Activated CD4-positive, alpha-beta T cell treated with anti-CD3 and anti-CD28 coated beads for 36 hours (primary cell): ENCODE measurements at regions of chr16 and their contacts with region 1.

Region 1: GRCh38 chr16:26386096-26386495 is 680.6 kb upstream of the C16orf82 start:
- DNase-seq: no peak
- ATAC-seq: no peak
- H3K4me3 Mint-ChIP-seq: no peak overlapping the region
- H3K27ac Mint-ChIP-seq: no peak overlapping the region
- H3K4me1 Mint-ChIP-seq: no peaks in the 10 kb centered on the region
- H3K27me3 Mint-ChIP-seq: peaks cover 10% of the 10 kb centered on the region

Region 2: GRCh38 chr16:26325451-26325850 is 60.6 kb before region 1 on chr16:
- CTCF ChIA-PET with region 1: no interaction called
- POLR2A ChIA-PET with region 1: no interaction called
- intact Hi-C with region 1: loop called in 1 of 2 experiments (anchors 10 kb)
- DNase-seq: no peak
- ATAC-seq: no peak
- H3K4me3 Mint-ChIP-seq: no peak overlapping the region
- H3K27ac Mint-ChIP-seq: no peak overlapping the region
- H3K4me1 Mint-ChIP-seq: no peaks in the 10 kb centered on the region
- H3K27me3 Mint-ChIP-seq: peaks cover 11% of the 10 kb centered on the region